ENCODE measurements at regions of chr14 and their contacts with region 1.

Region 1: DNA sequence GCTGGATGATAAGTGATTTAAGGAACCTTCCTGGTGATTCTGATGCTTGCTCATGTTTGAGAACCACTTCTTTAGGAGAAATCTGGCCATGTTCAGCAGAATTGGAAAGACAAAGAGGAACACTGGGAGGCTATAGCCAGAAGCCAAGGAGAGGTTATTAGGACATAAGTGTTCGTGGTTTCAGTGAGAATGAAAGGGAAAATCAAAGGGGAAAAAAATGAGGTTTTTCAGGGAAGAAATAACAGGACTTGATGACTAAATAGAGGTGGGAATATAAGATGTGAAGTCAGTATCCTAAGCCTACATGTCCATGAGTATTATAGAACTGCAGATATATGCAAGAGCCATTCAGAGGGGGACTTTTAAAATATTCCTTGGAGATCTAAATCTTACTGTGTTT is 95.6 kb downstream of the DAAM1 start:
- DNase-seq: no peak
- H3K4me3 ChIP-seq: no peak overlapping the region
- H3K27ac ChIP-seq: no peak overlapping the region
- H3K4me1 ChIP-seq: no peaks in the 10 kb centered on the region
- H3K27me3 ChIP-seq: no peaks in the 10 kb centered on the region
- CTCF ChIP-seq: no peak
- POLR2A ChIP-seq: no peak

Region 2: DNA sequence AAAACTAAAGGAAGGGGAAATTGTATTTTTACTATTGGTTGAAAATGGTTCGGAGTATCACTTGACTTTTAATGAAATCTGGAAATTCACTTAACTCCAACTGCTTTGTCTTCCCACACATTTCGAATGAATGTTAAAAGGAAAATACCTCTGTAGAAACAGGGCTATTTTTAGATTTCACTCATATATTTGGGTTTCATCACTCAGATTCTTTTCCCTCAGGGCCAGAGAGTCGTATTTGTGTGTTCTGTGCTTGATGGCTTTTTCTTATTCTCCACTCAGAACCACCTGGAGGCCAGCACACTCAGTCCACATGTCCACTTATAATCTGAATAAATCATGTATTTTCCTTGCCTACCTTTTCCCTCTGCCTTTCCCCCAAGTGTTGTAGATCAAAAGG is 55.6 kb before region 1 on chr14:
- intact Hi-C with region 1: loop called (anchors 2 kb)
- DNase-seq: no peak
- H3K4me3 ChIP-seq: no peak overlapping the region
- H3K27ac ChIP-seq: no peak overlapping the region
- H3K4me1 ChIP-seq: no peaks in the 10 kb centered on the region
- H3K27me3 ChIP-seq: no peaks in the 10 kb centered on the region
- CTCF ChIP-seq: no peak
- POLR2A ChIP-seq: no peak

Region 3: DNA sequence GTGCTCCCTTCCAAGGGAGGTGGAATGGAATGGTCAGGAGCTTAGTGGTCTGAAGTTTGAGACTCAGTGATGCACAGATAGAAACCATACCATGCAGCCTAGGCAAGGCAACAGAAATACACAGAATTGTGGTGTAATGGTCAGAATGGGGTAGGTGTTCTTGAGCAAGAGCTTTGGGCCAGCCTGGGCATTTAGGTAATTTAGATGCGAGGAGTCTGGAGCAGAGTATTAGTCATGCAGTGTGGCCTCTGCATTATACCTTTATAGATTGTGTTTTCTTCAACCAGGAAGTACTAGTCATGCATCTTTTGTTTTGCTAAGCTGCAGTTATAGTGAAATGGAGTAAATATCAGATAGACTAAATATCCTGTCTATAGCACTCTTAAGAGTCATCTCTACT is 22.7 kb after region 1 on chr14:
- intact Hi-C with region 1: no loop called
- DNase-seq: no peak
- H3K4me3 ChIP-seq: no peak overlapping the region
- H3K27ac ChIP-seq: no peak overlapping the region
- H3K4me1 ChIP-seq: no peaks in the 10 kb centered on the region
- H3K27me3 ChIP-seq: no peaks in the 10 kb centered on the region
- CTCF ChIP-seq: no peak
- POLR2A ChIP-seq: no peak